ENCODE measurements at regions of chr12 and their contacts with region 1.

Region 1: DNA sequence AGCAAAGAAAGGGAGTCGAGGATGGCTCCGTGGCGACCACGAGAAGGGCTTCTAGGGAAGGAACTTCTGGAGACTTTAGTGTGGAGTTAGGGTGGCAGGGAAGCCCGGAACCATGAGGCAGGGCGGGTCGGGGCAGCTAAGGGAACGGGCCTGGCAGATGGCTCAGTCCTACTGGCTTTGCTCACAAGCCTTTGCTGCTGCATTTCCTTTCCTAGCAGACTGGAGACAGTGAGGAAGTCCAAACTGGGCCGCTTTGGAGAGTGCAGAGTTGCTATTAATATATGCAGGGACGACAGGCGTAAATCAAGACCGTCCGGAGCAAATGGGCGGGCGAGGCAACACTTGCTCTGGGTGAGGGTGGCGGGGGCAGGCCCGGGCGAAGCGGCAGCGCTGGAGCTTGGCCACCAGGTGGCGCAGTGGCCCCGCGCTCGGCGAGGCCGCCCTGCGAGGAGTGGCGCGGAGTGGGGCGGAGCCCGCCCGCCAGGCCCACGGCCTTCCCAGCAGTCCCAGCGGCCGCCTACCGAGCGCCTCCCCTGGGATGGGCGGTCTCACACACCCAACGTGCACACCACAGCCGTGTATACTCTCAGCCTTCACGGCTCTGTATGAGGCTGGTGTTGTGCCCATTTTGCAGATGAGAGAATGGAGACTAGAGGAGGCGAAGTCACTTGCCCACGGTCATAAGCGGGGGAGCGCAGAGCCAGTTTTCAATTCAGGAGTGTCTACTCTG is 24.4 kb upstream of the LRTM2 start:
- DNase-seq: peak; percentile 73
- ATAC-seq: peak; percentile 97
- H3K4me3 ChIP-seq: peak overlapping the region; percentile 81 to 83
- H3K27ac ChIP-seq: peak overlapping the region; percentile 93
- H3K4me1 ChIP-seq: peaks cover 3 to 20% of the 10 kb centered on the region in 2 experiments; a peak in 3 of 4 replicates
- H3K27me3 ChIP-seq: no peaks in the 10 kb centered on the region
- CTCF ChIP-seq: peak; percentile 71 to 89 (median 82)
- POLR2A ChIP-seq: peak; percentile 94
- RAD21 ChIP-seq: peak; percentile 92

Region 2: GRCh38 chr12:1634590-1635191 is 161.3 kb before region 1 on chr12:
- CTCF ChIA-PET with region 1: interaction called, 91 read pairs
- POLR2A ChIA-PET with region 1: no interaction called
- RAD21 ChIA-PET with region 1: interaction called, 5 to 14 read pairs
- intact Hi-C with region 1: loop called (anchors 1 kb)
- DNase-seq: peak; percentile 63
- ATAC-seq: peak; percentile 81
- H3K4me3 ChIP-seq: no peak overlapping the region
- H3K27ac ChIP-seq: no peak overlapping the region
- H3K4me1 ChIP-seq: peaks cover 0 to 15% of the 10 kb centered on the region in 2 experiments; a peak in 3 of 4 replicates
- H3K27me3 ChIP-seq: no peaks in the 10 kb centered on the region
- CTCF ChIP-seq: peak; percentile 78 to 93 (median 90)
- POLR2A ChIP-seq: no peak
- RAD21 ChIP-seq: peak; percentile 85

Region 3: DNA sequence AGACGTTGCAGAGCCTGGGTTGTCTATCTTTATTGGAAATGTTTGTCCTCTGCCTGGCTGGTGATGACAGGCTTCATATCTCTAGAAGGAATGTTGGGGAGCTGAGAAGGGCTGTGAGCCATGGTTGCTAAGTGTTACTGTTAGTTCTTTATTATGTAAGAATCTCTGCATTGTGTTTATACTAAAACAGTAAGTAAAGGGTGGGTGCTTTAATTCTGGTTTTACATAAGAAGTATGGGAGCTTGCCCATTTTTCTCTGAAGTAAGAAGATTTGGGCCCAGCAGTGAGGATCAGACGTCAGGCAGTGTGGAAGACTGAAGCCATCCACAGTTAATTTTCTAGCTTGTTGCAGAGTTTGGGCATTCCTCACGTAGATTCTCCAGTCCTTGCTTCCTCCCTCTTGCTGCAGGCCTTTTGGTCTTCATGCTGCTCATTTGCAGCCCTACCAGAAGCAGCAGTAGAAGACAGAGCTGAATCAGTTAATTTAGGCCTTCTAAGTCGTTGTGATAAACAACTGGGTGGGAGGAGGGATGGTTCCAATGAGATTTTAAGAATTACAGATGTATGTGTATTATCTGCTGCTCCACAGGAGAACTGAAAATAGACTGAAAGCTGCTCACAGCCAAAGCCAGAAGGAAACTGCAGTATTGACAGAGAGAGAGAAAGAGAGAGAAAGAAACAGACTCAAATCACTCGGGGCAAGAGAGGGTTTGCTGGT is 145.5 kb before region 1 on chr12:
- CTCF ChIA-PET with region 1: interaction called, 242 read pairs
- POLR2A ChIA-PET with region 1: interaction called, 5 read pairs
- RAD21 ChIA-PET with region 1: interaction called, 15 to 30 read pairs
- intact Hi-C with region 1: loop called (anchors 1 kb)
- DNase-seq: no peak
- ATAC-seq: no peak
- H3K4me3 ChIP-seq: no peak overlapping the region
- H3K27ac ChIP-seq: no peak overlapping the region
- H3K4me1 ChIP-seq: peaks cover 0 to 4% of the 10 kb centered on the region in 2 experiments; a peak in 1 of 4 replicates
- H3K27me3 ChIP-seq: peaks cover 25% of the 10 kb centered on the region; the same call in 1 of the 2 replicates
- CTCF ChIP-seq: no peak
- POLR2A ChIP-seq: no peak
- RAD21 ChIP-seq: no peak

Region 4: GRCh38 chr12:1939801-1940607 is 144.1 kb after region 1 on chr12:
- CTCF ChIA-PET with region 1: interaction called, 32 read pairs
- POLR2A ChIA-PET with region 1: interaction called, 4 read pairs
- RAD21 ChIA-PET with region 1: interaction called, 5 read pairs
- intact Hi-C with region 1: loop called (anchors 1 kb)
- DNase-seq: peak; percentile 52
- ATAC-seq: peak; percentile 95
- H3K4me3 ChIP-seq: no peak overlapping the region
- H3K27ac ChIP-seq: no peak overlapping the region
- H3K4me1 ChIP-seq: no peaks in the 10 kb centered on the region
- H3K27me3 ChIP-seq: no peaks in the 10 kb centered on the region
- CTCF ChIP-seq: peak; percentile 78 to 98 (median 89); a peak in 5 of 6 replicates
- POLR2A ChIP-seq: no peak
- RAD21 ChIP-seq: peak; percentile 87

Region 5: DNA sequence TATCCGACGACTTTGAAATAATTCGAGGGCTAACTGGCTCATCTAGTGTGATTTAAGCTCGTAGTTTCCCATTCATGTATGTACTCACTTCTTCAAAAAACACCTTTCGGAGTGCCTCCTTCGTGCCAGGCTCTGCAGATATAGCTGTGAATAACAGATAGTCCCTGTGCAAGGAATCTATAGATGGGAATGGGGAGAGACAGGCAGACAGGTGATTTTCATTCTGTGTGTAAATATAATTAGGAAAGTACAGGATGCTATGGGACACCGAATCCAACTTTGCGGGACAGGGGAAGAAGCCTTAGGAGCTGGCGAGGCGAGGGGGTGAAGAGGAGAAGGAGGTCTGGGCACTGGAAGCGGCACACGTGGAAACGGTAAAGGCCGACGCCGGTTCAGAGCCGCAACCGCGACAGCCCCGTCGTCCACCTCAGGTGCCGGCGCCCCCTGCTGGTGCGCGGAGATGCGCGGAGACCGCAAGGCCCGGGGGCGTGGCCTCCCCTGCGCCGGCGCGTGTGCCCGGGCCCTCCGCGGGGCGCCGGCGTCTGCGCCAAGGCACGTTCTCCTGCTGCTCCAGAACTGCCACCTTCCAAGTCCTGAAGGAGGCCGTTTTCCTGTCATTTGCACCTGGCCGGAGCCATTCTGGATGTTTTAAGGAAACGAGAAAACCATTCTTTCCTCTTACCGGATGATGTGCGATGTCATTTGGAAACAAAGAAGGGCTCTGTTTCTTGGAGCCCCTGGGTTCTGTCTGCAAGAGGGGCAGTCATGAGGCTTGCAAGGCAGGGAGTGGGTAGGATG is 238.9 kb after region 1 on chr12:
- CTCF ChIA-PET with region 1: no interaction called
- POLR2A ChIA-PET with region 1: no interaction called
- RAD21 ChIA-PET with region 1: no interaction called
- intact Hi-C with region 1: loop called (anchors 2 kb)
- DNase-seq: peak; percentile 60
- ATAC-seq: peak; percentile 98
- H3K4me3 ChIP-seq: peak overlapping the region; percentile 30 to 47
- H3K27ac ChIP-seq: no peak overlapping the region
- H3K4me1 ChIP-seq: peaks cover 5 to 11% of the 10 kb centered on the region in 2 experiments
- H3K27me3 ChIP-seq: peaks cover 38% of the 10 kb centered on the region; the same call in 1 of the 2 replicates
- CTCF ChIP-seq: peak; percentile 35 to 85 (median 82); a peak in 5 of 6 replicates
- POLR2A ChIP-seq: peak; percentile 67
- RAD21 ChIP-seq: peak; percentile 64

Region 6: GRCh38 chr12:2284857-2285256 is 488.9 kb after region 1 on chr12:
- CTCF ChIA-PET with region 1: no interaction called
- POLR2A ChIA-PET with region 1: no interaction called
- RAD21 ChIA-PET with region 1: no interaction called
- intact Hi-C with region 1: loop called (anchors 2 kb)
- DNase-seq: peak; percentile 37
- ATAC-seq: peak; percentile 100
- H3K4me3 ChIP-seq: no peak overlapping the region
- H3K27ac ChIP-seq: no peak overlapping the region
- H3K4me1 ChIP-seq: peaks cover 0 to 6% of the 10 kb centered on the region in 2 experiments; a peak in 1 of 4 replicates
- H3K27me3 ChIP-seq: no peaks in the 10 kb centered on the region
- CTCF ChIP-seq: peak; percentile 66 to 83 (median 80)
- POLR2A ChIP-seq: no peak
- RAD21 ChIP-seq: peak; percentile 77

Region 7: DNA sequence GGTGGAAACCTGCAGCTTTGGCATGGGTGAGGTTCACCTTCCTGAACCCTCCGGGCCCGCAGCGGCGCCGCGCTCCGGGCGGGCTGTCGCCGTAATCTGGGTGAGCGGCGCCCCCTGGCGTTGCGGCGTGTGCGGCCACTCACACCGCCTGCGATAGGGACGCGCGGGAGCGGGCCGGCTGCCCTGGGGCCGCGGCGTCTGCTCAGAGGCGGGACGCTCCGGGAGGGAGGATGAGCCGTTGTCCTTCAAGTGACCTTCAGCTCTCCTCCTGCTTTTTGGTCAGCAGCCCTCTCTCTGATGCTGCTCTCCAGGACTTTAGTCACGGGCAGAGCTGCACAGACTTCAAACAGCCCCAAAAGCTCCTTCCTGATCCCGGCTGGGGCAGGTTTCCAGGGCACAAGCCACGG is 787.1 kb after region 1 on chr12:
- CTCF ChIA-PET with region 1: no interaction called
- POLR2A ChIA-PET with region 1: no interaction called
- RAD21 ChIA-PET with region 1: no interaction called
- intact Hi-C with region 1: loop called (anchors 5 kb)
- DNase-seq: peak; percentile 10
- ATAC-seq: peak; percentile 99
- H3K4me3 ChIP-seq: no peak overlapping the region; a peak in 1 of 4 replicates
- H3K27ac ChIP-seq: no peak overlapping the region
- H3K4me1 ChIP-seq: peaks cover 3 to 8% of the 10 kb centered on the region in 2 experiments; a peak in 3 of 4 replicates
- H3K27me3 ChIP-seq: peaks cover 28% of the 10 kb centered on the region
- CTCF ChIP-seq: peak; percentile 66 to 83 (median 81)
- POLR2A ChIP-seq: no peak
- RAD21 ChIP-seq: peak; percentile 92